ENCODE measurements at regions of chr1 and their contacts with region 1.

Region 1: DNA sequence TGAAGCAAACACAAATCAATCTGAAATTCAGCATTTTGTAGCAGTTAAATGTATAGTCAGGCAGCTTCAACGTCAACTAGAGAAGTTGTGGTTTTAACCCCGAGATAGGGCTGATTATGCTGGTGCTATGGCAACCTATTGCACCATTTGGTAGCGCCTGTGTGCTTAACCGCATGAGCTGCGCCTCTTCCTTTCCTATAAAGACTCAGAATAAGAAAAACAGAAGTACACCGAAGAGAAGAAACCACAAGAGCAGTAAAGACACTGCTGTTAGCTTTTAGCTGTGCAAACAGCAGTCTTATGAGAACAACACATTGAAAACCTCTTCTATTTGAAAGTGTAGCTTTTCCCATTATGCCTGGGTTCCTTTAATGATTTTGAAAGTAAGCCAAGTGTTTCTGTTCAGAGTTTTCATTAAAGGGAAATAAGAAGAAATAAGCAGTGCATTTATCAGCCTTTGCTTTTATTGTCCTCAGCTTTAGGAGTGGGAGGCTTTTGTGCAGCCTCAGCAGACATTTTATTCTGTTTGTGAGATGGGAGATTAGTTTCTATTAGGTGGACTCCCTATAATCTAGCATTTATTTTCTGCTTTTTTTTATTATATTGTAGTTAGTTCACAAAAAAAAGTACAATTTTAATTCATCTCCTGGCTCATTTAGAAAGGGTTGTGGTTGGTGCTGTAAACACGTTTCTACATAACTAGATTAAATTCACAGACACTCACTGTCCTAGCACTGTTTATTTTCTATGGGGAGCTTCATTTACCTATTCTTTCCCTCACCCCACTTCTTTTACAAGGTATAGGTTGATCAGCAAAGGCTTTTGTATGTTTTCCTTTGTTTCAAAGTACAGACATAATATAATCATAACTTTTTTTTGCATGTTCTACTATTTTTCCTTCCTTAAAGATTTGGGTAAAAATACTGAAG is 43.3 kb downstream of the PTPRC start:
- DNase-seq: peak; percentile 59
- ATAC-seq: peak; percentile 75
- H3K4me3 Mint-ChIP-seq: peak overlapping the region; percentile 78
- H3K27ac Mint-ChIP-seq: peak overlapping the region; percentile 93
- H3K4me1 Mint-ChIP-seq: peaks cover 74% of the 10 kb centered on the region
- H3K27me3 Mint-ChIP-seq: no peaks in the 10 kb centered on the region

Region 2: GRCh38 chr1:198523182-198523950 is 158.7 kb before region 1 on chr1:
- POLR2A ChIA-PET with region 1: interaction called, 32 read pairs
- DNase-seq: no peak
- ATAC-seq: peak; percentile 71
- H3K4me3 Mint-ChIP-seq: peak overlapping the region; percentile 79
- H3K27ac Mint-ChIP-seq: peak overlapping the region; percentile 89
- H3K4me1 Mint-ChIP-seq: peaks cover 62% of the 10 kb centered on the region
- H3K27me3 Mint-ChIP-seq: no peaks in the 10 kb centered on the region

Region 3: DNA sequence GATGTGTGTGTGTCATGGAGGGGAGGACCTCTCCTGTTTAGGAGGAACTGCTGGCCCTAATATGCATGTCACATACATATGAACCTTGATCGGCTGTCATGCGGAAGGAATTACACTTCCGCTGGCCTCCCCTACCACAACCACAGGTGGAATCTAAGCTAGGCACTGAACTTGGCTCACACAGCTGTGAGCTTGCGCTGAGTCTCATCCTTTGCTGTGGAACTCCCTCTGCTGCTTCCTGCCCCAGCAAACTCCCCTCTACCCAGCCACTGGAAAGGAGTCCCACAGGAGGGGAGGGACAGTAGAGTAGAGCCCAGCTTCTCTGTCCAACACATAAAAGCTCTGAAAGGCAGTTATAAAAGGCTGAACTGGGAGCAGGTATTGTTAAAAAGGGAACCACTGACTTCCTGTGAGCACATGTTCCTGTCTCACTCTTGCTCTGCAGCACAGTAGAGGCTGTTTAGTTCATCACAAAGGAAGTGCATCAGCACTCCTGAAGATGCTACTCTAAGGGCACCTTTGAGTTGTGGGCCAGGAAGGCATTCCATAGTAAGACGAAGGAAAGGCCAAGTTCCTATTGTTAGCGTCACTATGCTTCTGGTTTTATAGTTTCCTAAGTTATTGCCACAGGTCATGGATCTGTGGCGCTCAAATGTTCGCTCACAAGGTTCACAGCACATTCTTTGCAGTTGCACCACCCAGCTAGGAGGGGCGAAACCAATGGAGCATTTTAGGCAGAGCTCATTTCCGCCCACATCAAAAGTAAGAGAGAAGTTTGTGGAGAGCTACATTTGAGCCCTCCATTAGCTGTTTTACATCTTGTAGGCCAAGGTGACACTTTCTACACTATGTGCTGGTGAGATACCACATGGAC is 60.9 kb before region 1 on chr1:
- POLR2A ChIA-PET with region 1: interaction called, 62 read pairs
- DNase-seq: peak; percentile 77
- ATAC-seq: peak; percentile 75
- H3K4me3 Mint-ChIP-seq: peak overlapping the region; percentile 88
- H3K27ac Mint-ChIP-seq: peak overlapping the region; percentile 97
- H3K4me1 Mint-ChIP-seq: peaks cover 67% of the 10 kb centered on the region
- H3K27me3 Mint-ChIP-seq: no peaks in the 10 kb centered on the region

Region 4: DNA sequence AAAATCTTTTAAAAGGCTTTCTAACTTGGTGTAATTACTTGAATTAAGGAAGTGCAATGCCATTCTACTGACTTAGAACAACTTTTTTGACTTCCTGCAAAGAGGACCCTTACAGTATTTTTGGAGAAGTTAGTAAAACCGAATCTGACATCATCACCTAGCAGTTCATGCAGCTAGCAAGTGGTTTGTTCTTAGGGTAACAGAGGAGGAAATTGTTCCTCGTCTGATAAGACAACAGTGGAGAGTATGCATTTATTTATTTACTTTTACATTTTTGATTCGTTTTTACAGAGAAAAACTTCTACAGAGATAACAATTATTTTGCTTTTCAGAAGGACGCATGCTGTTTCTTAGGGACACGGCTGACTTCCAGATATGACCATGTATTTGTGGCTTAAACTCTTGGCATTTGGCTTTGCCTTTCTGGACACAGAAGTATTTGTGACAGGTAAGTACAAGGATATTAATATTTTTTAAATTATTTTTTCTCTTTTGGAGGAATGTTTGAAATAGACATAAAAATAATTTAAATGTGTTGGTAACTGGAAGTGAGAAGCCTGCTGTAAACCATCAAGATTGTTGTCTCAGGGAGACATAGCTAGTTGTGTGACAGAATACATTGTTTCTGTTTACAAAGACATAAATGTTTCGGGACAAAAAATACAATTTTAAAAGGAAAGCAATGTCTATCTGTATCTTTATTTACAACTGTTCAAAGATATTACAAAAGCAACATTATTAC is 43.0 kb before region 1 on chr1 and contains the start of gene PTPRC:
- POLR2A ChIA-PET with region 1: interaction called, 116 read pairs
- DNase-seq: no peak
- ATAC-seq: peak; percentile 67
- H3K4me3 Mint-ChIP-seq: peak within 1 kb of the TSS; percentile 98
- H3K27ac Mint-ChIP-seq: peak within 1 kb of the TSS; percentile 94
- H3K4me1 Mint-ChIP-seq: peaks cover 48% of the 10 kb centered on the region
- H3K27me3 Mint-ChIP-seq: no peaks in the 10 kb centered on the region
- total RNA-seq, gene PTPRC: 828 to 854 TPM

Region 5: DNA sequence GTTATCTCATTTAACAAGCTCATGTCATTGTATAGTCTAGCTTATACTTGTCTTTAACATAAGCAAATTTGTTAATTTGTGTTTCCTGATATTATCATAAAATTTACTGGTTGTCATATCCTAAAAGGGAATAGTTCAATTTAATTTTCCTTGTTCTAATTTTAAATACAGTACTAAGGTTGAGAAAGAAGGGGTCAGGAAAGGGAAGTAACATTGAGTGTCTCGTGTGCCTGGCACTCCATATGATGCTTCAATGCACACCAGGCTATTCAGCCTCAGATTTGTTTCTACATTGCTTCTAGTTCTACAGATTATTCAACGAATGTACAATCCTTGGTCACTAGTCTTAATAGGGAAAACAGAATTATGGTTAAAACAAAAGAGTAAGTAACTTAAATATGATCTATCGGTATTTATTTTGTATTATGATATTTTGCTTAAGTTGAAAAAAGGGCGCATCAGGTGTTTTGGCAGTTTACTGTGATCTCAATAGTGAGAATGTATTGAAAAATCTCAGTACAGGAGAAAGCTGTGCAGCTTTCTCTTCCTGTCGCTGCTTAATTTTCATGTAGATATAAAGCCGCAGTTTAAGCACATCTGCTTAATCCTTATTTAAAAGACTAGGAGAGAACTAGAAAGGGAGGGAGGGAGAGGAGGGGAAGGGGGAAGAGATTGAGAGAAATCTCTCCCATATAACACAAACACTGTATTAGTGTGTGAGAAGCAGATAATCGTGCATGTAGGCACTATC is 30.3 kb before region 1 on chr1:
- POLR2A ChIA-PET with region 1: interaction called, 116 read pairs
- DNase-seq: no peak
- ATAC-seq: peak; percentile 22
- H3K4me3 Mint-ChIP-seq: peak overlapping the region; percentile 84
- H3K27ac Mint-ChIP-seq: peak overlapping the region; percentile 87
- H3K4me1 Mint-ChIP-seq: peaks cover 65% of the 10 kb centered on the region
- H3K27me3 Mint-ChIP-seq: no peaks in the 10 kb centered on the region

Region 6: GRCh38 chr1:198657550-198658064 is 24.5 kb before region 1 on chr1:
- POLR2A ChIA-PET with region 1: interaction called, 44 read pairs
- DNase-seq: no peak
- ATAC-seq: peak; percentile 34
- H3K4me3 Mint-ChIP-seq: peak overlapping the region; percentile 83
- H3K27ac Mint-ChIP-seq: peak overlapping the region; percentile 88
- H3K4me1 Mint-ChIP-seq: peaks cover 56% of the 10 kb centered on the region
- H3K27me3 Mint-ChIP-seq: no peaks in the 10 kb centered on the region

Region 7: DNA sequence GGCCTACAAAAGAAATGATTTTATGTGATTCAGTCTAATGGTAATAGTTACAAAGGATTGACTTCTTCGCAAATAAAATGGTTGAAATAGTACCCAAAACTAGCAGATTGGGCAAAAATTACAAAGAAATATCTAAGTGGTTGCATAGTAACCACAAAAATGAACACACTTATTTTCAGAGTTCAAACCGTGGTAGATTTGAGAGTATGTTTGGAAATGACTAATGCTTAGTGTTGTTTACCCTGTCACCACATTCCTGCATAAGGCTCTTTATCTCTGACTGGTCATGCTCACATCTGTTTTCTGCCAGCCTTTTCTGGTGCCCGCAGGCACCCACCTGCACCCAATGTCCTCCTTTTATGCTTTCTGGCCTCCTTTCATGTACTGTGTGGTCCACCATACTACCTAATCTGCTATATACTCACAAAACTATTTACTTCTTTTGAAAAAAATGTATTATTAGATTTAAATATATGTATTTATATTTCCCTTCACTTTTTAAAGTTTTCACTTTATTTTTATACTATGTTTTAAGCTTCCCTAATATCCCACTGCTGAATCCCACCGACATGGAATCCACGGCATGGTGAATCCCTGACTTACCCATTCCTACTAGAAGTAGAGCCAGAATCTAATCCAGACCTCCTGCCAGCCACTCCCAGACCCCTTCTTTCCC is 12.9 kb before region 1 on chr1:
- POLR2A ChIA-PET with region 1: interaction called, 20 read pairs
- DNase-seq: no peak
- ATAC-seq: peak; percentile 78
- H3K4me3 Mint-ChIP-seq: peak overlapping the region; percentile 65
- H3K27ac Mint-ChIP-seq: peak overlapping the region; percentile 58
- H3K4me1 Mint-ChIP-seq: peaks cover 76% of the 10 kb centered on the region
- H3K27me3 Mint-ChIP-seq: no peaks in the 10 kb centered on the region

Region 8: GRCh38 chr1:198713081-198713480 is 31.0 kb after region 1 on chr1:
- POLR2A ChIA-PET with region 1: no interaction called
- DNase-seq: no peak
- ATAC-seq: no peak
- H3K4me3 Mint-ChIP-seq: no peak overlapping the region
- H3K27ac Mint-ChIP-seq: peak overlapping the region; percentile 36
- H3K4me1 Mint-ChIP-seq: peaks cover 15% of the 10 kb centered on the region
- H3K27me3 Mint-ChIP-seq: no peaks in the 10 kb centered on the region

Measured in activated naive CD8-positive, alpha-beta T cell treated with anti-CD3 and anti-CD28 coated beads, Interleukin-2, amount 10 ng/mL, durations not matched to agents 7 days and 5 days (primary cell).